ENCODE measurements at regions of chr9 and their contacts with region 1.

Region 1: GRCh38 chr9:98045234-98046179 is 11.0 kb upstream of the NANS start:
- DNase-seq: peak; percentile 52
- ATAC-seq: peak; percentile 96
- H3K4me3 Mint-ChIP-seq: peak overlapping the region; percentile 84
- H3K27ac Mint-ChIP-seq: peak overlapping the region; percentile 95
- H3K4me1 Mint-ChIP-seq: peaks cover 31% of the 10 kb centered on the region
- H3K27me3 Mint-ChIP-seq: no peaks in the 10 kb centered on the region

Region 2: GRCh38 chr9:98007251-98007928 is 38.1 kb before region 1 on chr9:
- CTCF ChIA-PET with region 1: interaction called, 3 read pairs
- POLR2A ChIA-PET with region 1: interaction called, 16 read pairs
- intact Hi-C with region 1: no loop called
- DNase-seq: no peak
- ATAC-seq: peak; percentile 67
- H3K4me3 Mint-ChIP-seq: no peak overlapping the region
- H3K27ac Mint-ChIP-seq: peak overlapping the region; percentile 53
- H3K4me1 Mint-ChIP-seq: peaks cover 42% of the 10 kb centered on the region
- H3K27me3 Mint-ChIP-seq: no peaks in the 10 kb centered on the region

Region 3: GRCh38 chr9:98056269-98057137 is 11.0 kb after region 1 on chr9 and contains the start of gene NANS:
- CTCF ChIA-PET with region 1: interaction called, 16 read pairs
- POLR2A ChIA-PET with region 1: interaction called, 24 read pairs
- intact Hi-C with region 1: loop called (anchors 1 kb)
- DNase-seq: peak; percentile 97
- ATAC-seq: peak; percentile 94
- H3K4me3 Mint-ChIP-seq: peak within 1 kb of the TSS; percentile 94
- H3K27ac Mint-ChIP-seq: peak within 1 kb of the TSS; percentile 98
- H3K4me1 Mint-ChIP-seq: peaks cover 28% of the 10 kb centered on the region
- H3K27me3 Mint-ChIP-seq: no peaks in the 10 kb centered on the region
- total RNA-seq, gene NANS: 45.9 to 47.7 TPM